Dorsolateral prefrontal cortex (tissue), 120 donors: ENCODE measurements at regions of chr12 and their contacts with region 1.

Region 1: GRCh38 chr12:88453323-88453722 is 126.9 kb downstream of the KITLG start:
- DNase-seq: no peak
- H3K4me3 ChIP-seq: no peak overlapping the region
- H3K27ac ChIP-seq: peak overlapping the region in 5 of 59 donors; percentile 0 to 72 (median 32)
- H3K27me3 ChIP-seq: no peaks in the 10 kb centered on the region
- CTCF ChIP-seq: no peak

Region 2: DNA sequence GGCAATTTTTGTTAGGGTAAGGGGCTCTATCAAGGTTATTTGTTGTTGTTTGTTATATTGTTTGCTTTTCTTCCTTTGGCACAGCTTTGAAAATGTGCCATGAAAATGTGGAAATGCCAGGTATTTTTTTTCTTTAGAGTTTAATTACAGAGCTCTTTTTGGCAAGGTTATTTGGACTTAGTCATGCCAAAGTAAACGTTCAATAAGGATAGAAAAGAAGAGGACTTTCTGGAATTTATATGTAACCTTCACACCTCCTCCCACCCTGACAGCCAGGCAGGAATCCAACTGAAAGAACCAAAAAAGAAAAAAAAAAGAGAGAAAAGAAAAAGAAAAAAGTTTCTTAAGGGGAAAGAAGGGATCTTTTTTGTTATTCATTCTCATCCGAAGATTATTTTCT is 90.9 kb before region 1 on chr12:
- intact Hi-C with region 1: loop called in 1 of 2 experiments (anchors 5 kb)
- DNase-seq: no peak
- H3K4me3 ChIP-seq: no peak overlapping the region
- H3K27ac ChIP-seq: peak overlapping the region in 14 of 59 donors; percentile 9 to 57 (median 38)
- H3K27me3 ChIP-seq: no peaks in the 10 kb centered on the region
- CTCF ChIP-seq: no peak

Region 3: GRCh38 chr12:88763601-88764000 is 310.3 kb after region 1 on chr12:
- intact Hi-C with region 1: no loop called
- DNase-seq: no peak
- H3K4me3 ChIP-seq: no peak overlapping the region
- H3K27ac ChIP-seq: no peak overlapping the region
- H3K27me3 ChIP-seq: no peaks in the 10 kb centered on the region
- CTCF ChIP-seq: no peak